Heart right ventricle (tissue), 16 donors: ENCODE measurements at regions of chr16 and their contacts with region 1.

Region 1: GRCh38 chr16:50548125-50548908 is at the start of gene NKD1:
- DNase-seq: peak; percentile 54 to 72
- ATAC-seq: peak; percentile 78 to 91 (median 86)
- H3K4me3 ChIP-seq: peak within 1 kb of the TSS; percentile 40 to 68 (median 66)
- H3K27ac ChIP-seq: peak within 1 kb of the TSS in 2 of 10 donors; percentile 13 to 28
- H3K4me1 ChIP-seq: peaks cover 0 to 14% (median 9%) of the 10 kb centered on the region in 9 donors
- H3K27me3 ChIP-seq: peaks cover 0 to 54% (median 32%) of the 10 kb centered on the region in 7 donors
- CTCF ChIP-seq: no peak
- total RNA-seq, gene NKD1: 0.22 to 1.1 (median 0.52) TPM

Region 2: GRCh38 chr16:50644729-50645128 is 96.4 kb after region 1 on chr16:
- intact Hi-C with region 1: loop called in 1 of 10 experiments (anchors 10 kb)
- DNase-seq: peak in 1 of 2 donors; percentile 13
- ATAC-seq: peak in 5 of 8 donors; percentile 42 to 62 (median 52)
- H3K4me3 ChIP-seq: no peak overlapping the region
- H3K27ac ChIP-seq: no peak overlapping the region
- H3K4me1 ChIP-seq: no peaks in the 10 kb centered on the region
- H3K27me3 ChIP-seq: peaks cover 0 to 21% (median 6%) of the 10 kb centered on the region in 7 donors
- CTCF ChIP-seq: peak; percentile 17 to 56 (median 36)